Right ventricle myocardium superior (tissue), 1 donor: ENCODE measurements at regions of chr12 and their contacts with region 1.

Region 1: DNA sequence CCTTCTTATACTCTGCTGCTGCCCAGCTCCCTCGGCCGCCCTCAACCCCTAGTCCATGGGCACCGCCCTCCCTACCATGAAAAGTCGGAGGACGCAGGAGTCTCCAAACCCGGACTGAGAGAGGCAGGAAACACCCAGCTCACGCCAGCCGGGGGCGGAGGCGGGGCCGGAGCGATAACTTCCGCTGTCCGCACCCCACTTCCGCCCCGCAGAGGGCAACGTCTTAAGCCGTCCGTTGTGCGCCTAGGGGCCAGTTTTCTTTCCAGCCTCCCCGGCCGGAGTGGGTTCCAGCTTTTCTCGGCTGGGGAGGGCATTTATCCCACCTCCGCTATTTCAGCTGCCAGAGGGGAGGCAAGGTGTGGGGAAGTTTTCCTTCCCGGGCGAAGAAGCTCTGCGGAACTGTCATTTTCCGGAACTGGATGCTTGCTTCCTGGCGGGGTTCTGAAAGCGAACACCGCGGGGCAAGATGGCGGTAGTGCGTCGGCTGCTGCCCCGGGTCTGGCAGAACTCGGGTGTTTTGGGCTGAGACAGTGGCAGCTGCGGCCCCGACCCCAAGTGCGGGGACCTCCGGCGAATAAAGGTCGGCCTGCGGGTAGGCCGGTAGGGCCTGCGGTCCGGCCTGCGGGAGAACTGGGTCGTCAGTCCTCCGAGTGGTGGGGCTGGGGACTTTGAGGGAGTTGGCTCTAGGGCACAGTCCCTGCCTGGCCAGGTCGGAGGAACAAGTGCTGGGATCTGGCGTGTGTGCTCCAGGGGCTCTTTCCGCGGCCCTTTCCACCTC is at the starts of genes KCTD10 and UBE3B:
- DNase-seq: peak; percentile 93
- ATAC-seq: peak; percentile 100
- total RNA-seq, gene KCTD10: 27.1 TPM
- total RNA-seq, gene UBE3B: 50.9 TPM

Region 2: DNA sequence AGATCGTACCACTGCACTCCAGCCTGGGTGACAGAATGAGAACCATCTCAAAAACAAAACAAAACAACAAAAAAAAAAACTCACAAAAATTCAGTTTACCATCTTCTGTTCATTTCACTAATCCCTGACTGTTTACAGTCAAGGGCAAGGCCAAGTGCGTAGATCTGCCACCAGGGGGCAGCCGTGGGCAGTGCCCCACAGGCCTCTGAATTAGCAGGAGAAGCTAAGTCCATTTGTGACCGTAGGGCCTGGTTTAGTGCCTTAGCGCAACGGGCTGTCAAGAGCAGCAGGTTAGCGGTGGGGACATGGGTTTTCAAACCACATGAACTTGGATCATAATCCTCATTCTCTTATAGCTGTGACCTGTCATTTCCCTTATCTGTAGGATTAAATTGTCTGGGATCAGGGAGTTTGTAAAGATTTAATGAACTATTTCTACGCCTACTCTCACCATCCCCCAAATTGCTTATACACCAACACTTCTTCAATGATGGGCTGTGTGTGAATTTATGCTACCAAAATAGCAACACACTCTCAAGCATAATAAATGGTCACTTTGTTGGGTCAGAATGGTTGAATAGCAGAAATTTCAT is 49.2 kb before region 1 on chr12:
- intact Hi-C with region 1: loop called (anchors 5 kb)
- DNase-seq: peak; percentile 89
- ATAC-seq: peak; percentile 93

Region 3: GRCh38 chr12:109542014-109542413 is 64.6 kb after region 1 on chr12:
- intact Hi-C with region 1: no loop called
- DNase-seq: peak; percentile 4
- ATAC-seq: no peak